Heart left ventricle (tissue), 16 donors: ENCODE measurements at regions of chr7 and their contacts with region 1.

Region 1: DNA sequence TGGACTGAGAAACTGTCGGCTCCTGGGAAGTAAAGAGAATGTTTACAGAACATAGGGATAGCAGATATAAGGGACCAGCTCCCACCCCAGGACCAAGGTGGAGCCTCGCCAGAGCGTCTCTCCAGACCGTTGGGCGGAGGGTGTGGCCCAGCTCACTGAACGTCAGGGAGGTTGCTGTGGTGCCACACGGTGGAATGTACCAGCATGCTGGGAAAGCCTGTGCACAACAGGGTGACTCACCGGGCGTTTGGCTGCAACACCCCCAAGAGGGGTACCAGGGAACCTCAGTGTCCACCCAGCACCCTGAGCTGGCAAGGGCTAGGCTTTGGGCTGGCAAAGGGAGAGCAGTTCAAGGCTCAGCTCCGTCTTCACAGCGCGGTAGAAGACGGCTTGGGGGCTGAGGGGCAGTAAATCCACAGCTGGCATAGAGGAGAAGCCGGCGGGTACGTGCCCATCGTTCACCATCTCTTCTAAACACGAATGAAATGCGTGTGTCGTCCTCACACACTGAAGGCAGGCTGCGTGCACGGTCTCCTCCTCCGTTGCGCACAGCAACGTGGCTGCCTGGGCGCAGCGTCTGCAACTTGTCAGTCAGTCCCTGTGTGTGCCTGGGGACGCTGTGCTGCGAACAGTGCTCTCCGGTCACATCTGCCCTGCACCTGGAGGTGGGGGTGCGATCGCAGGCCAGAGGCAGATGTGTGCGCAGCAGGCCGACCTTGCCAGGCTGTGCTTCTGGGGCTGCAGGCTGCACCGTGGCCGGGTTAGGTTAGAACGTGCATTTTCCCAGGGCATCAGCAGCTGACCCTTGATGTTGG is 8.5 kb upstream of the GET4 start:
- DNase-seq: peak; percentile 56 to 89 (median 72)
- ATAC-seq: peak; percentile 83 to 89 (median 84)
- H3K4me3 ChIP-seq: peak overlapping the region in 1 of 12 donors; percentile 4
- H3K27ac ChIP-seq: peak overlapping the region; percentile 33 to 88 (median 74)
- H3K4me1 ChIP-seq: peaks cover 0 to 41% (median 17%) of the 10 kb centered on the region in 12 donors
- H3K27me3 ChIP-seq: no peaks in the 10 kb centered on the region
- CTCF ChIP-seq: peak in 1 of 12 donors; percentile 22
- POLR2A ChIP-seq: no peak

Region 2: GRCh38 chr7:821688-822087 is 46.2 kb before region 1 on chr7:
- intact Hi-C with region 1: loop called in 7 of 10 experiments (anchors 2 to 5 kb)
- DNase-seq: peak in 2 of 5 donors; percentile 44 to 50
- ATAC-seq: peak; percentile 32 to 78 (median 74)
- H3K4me3 ChIP-seq: no peak overlapping the region
- H3K27ac ChIP-seq: peak overlapping the region in 9 of 12 donors; percentile 54 to 81 (median 72)
- H3K4me1 ChIP-seq: peaks cover 0 to 92% (median 63%) of the 10 kb centered on the region in 12 donors
- H3K27me3 ChIP-seq: no peaks in the 10 kb centered on the region
- CTCF ChIP-seq: peak in 8 of 12 donors; percentile 10 to 46 (median 30)
- POLR2A ChIP-seq: no peak

Region 3: GRCh38 chr7:923108-924041 is 55.5 kb after region 1 on chr7:
- intact Hi-C with region 1: no loop called
- DNase-seq: peak; percentile 53 to 89 (median 74)
- ATAC-seq: peak; percentile 24 to 81 (median 58)
- H3K4me3 ChIP-seq: peak overlapping the region in 5 of 12 donors; percentile 1 to 46 (median 19)
- H3K27ac ChIP-seq: peak overlapping the region in 3 of 12 donors; percentile 32 to 89 (median 46)
- H3K4me1 ChIP-seq: peaks cover 0 to 51% (median 10%) of the 10 kb centered on the region in 12 donors
- H3K27me3 ChIP-seq: peaks cover 0 to 5% (median 0%) of the 10 kb centered on the region in 9 donors
- CTCF ChIP-seq: no peak
- POLR2A ChIP-seq: no peak